ENCODE measurements at regions of chr17 and their contacts with region 1.

Region 1: DNA sequence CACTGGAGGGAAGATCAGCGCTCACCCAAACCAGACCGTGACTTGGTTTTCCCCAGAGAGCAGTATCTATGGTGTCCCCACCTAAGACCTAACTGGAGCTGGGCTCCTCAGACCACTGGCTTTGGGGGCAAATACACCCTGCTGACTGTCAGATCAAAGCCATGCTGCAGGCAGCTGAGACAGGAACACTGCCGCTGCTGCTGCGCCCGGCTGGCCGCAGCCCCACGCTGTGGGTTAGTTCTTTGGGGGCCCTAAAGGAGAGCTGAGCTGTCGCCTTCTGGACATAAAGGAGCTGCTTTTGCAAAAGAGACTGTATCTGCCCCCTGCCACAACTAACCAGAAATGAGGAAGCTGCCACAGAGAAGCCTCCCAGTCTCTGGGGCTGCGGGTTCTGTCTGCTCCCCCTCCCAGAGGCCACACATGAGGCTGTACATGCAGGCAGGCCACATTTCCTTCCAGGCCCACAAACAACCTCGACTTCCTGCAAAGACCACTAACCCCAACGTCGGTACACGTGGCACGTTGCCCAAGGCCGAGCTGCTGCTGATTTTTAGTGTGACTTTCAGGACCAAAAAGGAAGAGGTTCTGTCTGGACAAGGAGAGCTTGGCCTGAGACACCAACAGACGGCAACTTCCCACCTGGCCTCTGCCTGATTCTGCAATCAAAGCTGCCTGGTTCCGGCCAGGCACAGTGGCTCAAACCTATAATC is 18.2 kb upstream of the ABR start:
- DNase-seq: no peak

Region 2: DNA sequence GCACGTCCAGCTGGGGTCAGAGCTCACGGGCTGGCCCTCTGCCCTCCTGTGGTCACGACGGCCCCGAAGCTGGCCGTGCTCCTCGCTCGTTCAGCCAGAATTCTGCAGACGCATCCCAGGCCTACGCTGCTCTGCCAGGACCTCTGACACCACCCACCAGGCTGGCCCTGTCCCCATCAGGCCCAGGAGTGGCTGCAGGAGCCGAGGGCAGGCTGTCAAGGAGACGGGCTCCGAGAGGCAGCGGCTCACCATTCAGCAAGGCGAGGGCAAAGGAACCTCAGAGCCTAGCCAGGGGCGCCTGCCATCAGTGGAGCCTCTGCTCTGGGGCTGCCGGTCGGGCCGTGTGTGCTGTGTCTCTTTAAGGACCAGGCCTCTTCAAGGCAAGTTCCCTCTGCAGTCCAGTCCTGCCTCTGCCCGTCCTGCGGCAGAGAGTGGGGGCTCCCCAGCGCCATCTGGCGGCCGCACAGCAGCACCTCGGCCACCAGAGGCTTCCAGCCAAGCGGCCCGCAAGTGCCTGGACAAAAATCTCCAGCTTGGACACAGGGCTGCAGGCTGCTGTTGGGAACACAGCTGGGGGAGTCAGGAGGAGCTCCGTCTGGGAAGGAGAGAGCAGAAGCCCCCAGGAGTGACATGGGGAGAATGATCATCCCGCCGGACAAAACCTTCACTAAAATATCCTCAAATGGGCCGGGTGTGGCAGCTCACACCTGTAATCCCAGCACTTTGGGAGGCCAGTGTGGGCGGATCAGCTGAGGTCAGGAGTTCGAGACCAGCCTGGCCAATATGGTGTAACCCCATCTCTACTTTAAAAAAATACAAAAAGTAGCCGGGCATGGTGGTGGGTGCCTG is 10.8 kb before region 1 on chr17:
- CTCF ChIA-PET with region 1: interaction called, 18 read pairs
- POLR2A ChIA-PET with region 1: no interaction called
- DNase-seq: peak; percentile 92

Region 3: GRCh38 chr17:1251866-1252608 is 54.1 kb after region 1 on chr17:
- CTCF ChIA-PET with region 1: no interaction called
- POLR2A ChIA-PET with region 1: no interaction called
- DNase-seq: no peak